ENCODE measurements at regions of chr11 and their contacts with region 1.

Region 1: DNA sequence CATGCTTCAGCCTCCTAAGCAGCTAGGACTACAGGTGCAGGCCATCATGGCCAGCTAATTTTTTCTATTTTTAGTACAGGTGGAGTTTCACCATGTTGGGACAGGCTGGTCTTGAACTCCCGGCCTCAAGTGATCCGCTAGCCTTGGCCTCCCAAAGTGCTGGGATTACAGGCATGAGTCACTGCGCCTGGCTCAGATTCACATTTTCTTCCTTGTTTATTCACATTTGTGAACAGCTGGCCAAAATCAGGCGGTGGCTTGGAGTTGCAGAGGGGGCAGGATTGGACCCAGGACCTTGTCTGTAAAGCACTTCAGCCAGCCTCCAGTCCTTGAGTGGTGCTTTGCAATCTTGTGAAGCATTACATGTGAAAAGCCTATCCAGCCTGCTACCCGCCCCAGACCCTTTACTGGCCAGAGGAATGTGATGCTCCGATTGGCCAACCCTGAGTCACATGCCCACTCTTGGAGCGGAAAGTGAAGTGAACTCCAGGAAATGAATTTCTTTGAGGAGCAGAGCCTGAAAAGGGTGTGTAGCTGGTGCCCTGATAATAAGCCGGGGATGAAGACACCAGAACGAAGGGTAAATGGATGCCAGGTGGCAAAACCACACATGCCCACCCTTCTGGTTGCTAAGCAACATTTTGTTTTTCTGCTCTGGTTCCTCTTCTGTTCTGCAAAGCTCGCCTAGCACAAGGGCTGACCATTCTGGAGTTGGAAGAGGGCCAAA is 62.6 kb upstream of the PTPRJ start:
- DNase-seq: peak; percentile 45
- ATAC-seq: peak; percentile 55
- H3K4me3 Mint-ChIP-seq: peak overlapping the region; percentile 53
- H3K27ac Mint-ChIP-seq: peak overlapping the region; percentile 99
- H3K4me1 Mint-ChIP-seq: peaks cover 91% of the 10 kb centered on the region
- H3K27me3 Mint-ChIP-seq: no peaks in the 10 kb centered on the region
- CTCF ChIP-seq: no peak

Region 2: GRCh38 chr11:47667135-47667534 is 250.7 kb before region 1 on chr11:
- CTCF ChIA-PET with region 1: no interaction called
- POLR2A ChIA-PET with region 1: no interaction called
- intact Hi-C with region 1: no loop called
- DNase-seq: no peak
- ATAC-seq: no peak
- H3K4me3 Mint-ChIP-seq: no peak overlapping the region
- H3K27ac Mint-ChIP-seq: no peak overlapping the region
- H3K4me1 Mint-ChIP-seq: peaks cover 4% of the 10 kb centered on the region
- H3K27me3 Mint-ChIP-seq: no peaks in the 10 kb centered on the region
- CTCF ChIP-seq: no peak

Region 3: GRCh38 chr11:47858169-47858543 is 59.6 kb before region 1 on chr11:
- CTCF ChIA-PET with region 1: interaction called, 3 read pairs
- POLR2A ChIA-PET with region 1: interaction called, 19 read pairs
- intact Hi-C with region 1: loop called (anchors 1 kb)
- DNase-seq: no peak
- ATAC-seq: no peak
- H3K4me3 Mint-ChIP-seq: peak overlapping the region; percentile 66
- H3K27ac Mint-ChIP-seq: peak overlapping the region; percentile 95
- H3K4me1 Mint-ChIP-seq: peaks cover 89% of the 10 kb centered on the region
- H3K27me3 Mint-ChIP-seq: no peaks in the 10 kb centered on the region
- CTCF ChIP-seq: no peak

Region 4: DNA sequence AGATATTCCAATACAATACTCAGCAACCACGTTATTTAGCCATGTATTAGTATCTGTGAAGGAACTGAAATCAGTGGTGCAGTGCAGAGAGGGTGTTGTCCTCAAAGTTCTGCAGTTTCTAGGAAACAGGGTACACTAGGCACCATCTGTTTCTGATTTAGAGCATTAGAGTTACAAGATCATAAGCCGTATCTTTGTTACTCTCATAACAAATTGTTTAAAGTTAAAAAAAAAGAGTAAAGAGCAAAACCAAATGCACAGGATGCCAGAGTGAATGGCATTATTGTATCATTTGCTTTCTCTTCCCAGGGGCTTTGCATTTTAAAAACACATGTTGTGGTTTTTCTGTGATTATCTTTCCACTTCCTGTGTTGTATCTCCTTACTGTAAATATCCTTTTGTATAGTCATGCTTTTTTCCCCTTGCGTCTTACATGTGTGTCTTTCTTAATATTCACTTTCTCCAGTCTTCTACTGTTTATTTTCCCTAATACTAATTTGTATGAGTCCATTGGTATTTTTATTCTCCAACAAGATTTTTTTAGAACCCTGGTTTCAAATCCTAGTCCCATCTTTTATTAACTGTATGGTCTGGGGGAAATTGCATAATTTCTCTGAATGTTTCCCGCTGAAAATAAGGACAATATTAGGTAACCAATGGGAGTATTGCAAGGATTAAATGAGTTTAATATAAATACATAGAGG is 54.5 kb before region 1 on chr11:
- CTCF ChIA-PET with region 1: interaction called, 3 read pairs
- POLR2A ChIA-PET with region 1: interaction called, 9 read pairs
- intact Hi-C with region 1: loop called (anchors 1 kb)
- DNase-seq: no peak
- ATAC-seq: peak; percentile 69
- H3K4me3 Mint-ChIP-seq: peak overlapping the region; percentile 56
- H3K27ac Mint-ChIP-seq: peak overlapping the region; percentile 91
- H3K4me1 Mint-ChIP-seq: peaks cover 84% of the 10 kb centered on the region
- H3K27me3 Mint-ChIP-seq: no peaks in the 10 kb centered on the region
- CTCF ChIP-seq: no peak

Region 5: DNA sequence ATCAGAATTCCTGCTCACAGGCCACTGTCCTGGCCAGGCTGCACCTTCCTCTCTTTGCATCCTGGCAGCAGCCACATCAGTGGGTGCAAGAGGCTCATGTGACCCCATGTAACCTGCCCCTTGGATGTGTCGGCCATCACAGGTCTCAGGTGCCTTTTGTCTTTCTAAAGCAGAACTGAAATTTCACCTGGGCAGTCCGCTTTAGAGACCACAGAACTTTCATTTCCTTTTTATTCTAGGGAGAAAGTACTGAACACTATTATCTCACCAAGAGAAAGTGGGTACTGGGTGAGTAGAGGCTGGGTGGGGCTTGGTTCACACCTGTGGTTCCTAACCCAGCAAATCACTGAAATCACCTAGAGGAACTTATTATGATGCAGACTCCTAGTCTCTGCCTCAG is 18.0 kb before region 1 on chr11:
- CTCF ChIA-PET with region 1: no interaction called
- POLR2A ChIA-PET with region 1: interaction called, 5 read pairs
- intact Hi-C with region 1: loop called (anchors 1 kb)
- DNase-seq: no peak
- ATAC-seq: peak; percentile 94
- H3K4me3 Mint-ChIP-seq: no peak overlapping the region
- H3K27ac Mint-ChIP-seq: peak overlapping the region; percentile 83
- H3K4me1 Mint-ChIP-seq: peaks cover 48% of the 10 kb centered on the region
- H3K27me3 Mint-ChIP-seq: no peaks in the 10 kb centered on the region
- CTCF ChIP-seq: no peak

Region 6: GRCh38 chr11:47950396-47950795 is 32.6 kb after region 1 on chr11:
- CTCF ChIA-PET with region 1: no interaction called
- POLR2A ChIA-PET with region 1: no interaction called
- intact Hi-C with region 1: loop called (anchors 2 kb)
- DNase-seq: peak; percentile 47
- ATAC-seq: peak; percentile 97
- H3K4me3 Mint-ChIP-seq: peak overlapping the region; percentile 26
- H3K27ac Mint-ChIP-seq: peak overlapping the region; percentile 79
- H3K4me1 Mint-ChIP-seq: peaks cover 54% of the 10 kb centered on the region
- H3K27me3 Mint-ChIP-seq: no peaks in the 10 kb centered on the region
- CTCF ChIP-seq: no peak

Measured in activated B cell treated with CpG ODN at 0.5 μM for 24 hours (primary cell).